Thyroid gland (tissue), 4 donors: ENCODE measurements at regions of chr16 and their contacts with region 1.

Region 1: DNA sequence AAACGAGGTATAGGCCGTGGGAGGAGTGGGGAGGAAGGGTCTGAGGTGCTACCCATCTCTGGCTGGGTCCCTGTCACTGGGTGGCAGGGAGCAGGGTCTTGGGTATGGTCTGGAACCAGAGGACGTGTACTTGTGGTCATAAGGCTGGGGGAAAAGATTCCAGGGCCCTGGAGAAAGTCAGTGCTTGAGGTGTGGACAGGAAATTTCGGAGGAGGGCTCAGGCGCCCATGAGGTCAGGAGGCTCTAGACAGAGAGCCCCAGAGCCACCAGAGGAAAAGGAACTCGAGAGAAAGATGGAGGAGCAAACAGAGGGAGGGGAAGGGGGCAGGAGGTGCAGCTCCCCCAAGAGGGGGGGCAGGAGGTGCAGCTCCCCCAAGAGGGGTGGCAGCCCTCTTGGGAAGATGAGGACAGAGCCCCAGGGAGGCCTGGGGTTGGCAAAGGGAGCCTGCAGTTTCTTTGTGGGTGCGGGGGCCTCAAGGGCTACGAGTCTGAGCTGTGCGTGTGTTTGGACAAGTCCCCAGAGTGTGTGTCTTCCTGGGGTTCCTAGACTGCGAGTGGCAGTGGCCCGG is 683 bp upstream of the SLC7A6 start:
- DNase-seq: no peak
- H3K4me3 ChIP-seq: peak overlapping the region in 1 of 3 donors; percentile 69
- H3K27ac ChIP-seq: peak overlapping the region; percentile 99 to 100 (median 99)
- H3K4me1 ChIP-seq: peaks cover 34 to 57% of the 10 kb centered on the region in 2 donors
- H3K27me3 ChIP-seq: no peaks in the 10 kb centered on the region
- CTCF ChIP-seq: peak in 1 of 6 experiments; percentile 54
- POLR2A ChIP-seq: no peak

Region 2: GRCh38 chr16:68328151-68328859 is 64.7 kb after region 1 on chr16:
- intact Hi-C with region 1: loop called (anchors 2 kb)
- DNase-seq: peak; percentile 86 to 90
- H3K4me3 ChIP-seq: no peak overlapping the region
- H3K27ac ChIP-seq: no peak overlapping the region
- H3K4me1 ChIP-seq: peaks cover 10 to 34% of the 10 kb centered on the region in 2 donors
- H3K27me3 ChIP-seq: no peaks in the 10 kb centered on the region
- CTCF ChIP-seq: peak; percentile 78 to 98 (median 97)
- POLR2A ChIP-seq: no peak